ENCODE measurements at regions of chr10 and their contacts with region 1.

Region 1: GRCh38 chr10:48656241-48656913 is 28.3 kb upstream of the WDFY4 start:
- DNase-seq: peak; percentile 85
- H3K4me3 ChIP-seq: peak overlapping the region; percentile 30 to 70 (median 59)
- H3K27ac ChIP-seq: no peak overlapping the region
- H3K4me1 ChIP-seq: peaks cover 16% of the 10 kb centered on the region
- H3K27me3 ChIP-seq: no peaks in the 10 kb centered on the region
- CTCF ChIP-seq: peak; percentile 85

Region 2: DNA sequence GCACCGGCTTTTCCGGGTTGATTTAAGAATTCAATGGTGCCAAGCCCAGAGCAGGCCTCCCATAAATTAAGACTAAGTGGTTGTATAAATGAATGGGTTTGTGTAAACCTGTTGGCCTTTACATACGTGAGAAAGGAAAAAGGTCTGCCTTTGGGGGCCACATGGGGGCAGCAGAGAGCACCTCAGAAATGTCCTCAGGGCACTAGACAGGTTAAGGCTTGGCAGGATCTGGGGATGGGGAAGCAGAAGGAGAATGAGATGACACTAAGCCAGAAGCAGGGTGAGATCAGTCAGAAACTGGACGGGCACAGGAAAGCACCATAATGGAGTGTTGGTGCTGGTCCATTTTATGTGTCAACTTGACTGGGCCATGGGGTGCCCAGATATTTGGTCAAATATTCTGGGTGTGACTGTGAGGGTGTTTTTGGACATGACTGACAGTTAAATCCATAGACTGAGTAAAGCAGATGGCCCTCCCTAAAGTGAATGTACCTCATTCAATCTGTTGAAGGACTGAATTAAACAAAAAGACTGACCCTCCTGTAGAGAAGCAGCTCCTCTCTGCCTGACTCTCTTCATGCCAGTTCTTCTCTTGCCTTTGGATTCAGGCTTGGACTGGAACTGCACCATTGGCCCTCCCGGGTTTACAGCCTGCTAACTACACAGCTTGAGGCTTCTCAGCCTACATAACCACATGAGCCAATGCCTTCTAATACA is 440.7 kb before region 1 on chr10:
- CTCF ChIA-PET with region 1: no interaction called
- dilution Hi-C with region 1: no loop called
- in situ Hi-C with region 1: no loop called
- intact Hi-C with region 1: loop called (anchors 5 kb)
- DNase-seq: peak; percentile 69
- H3K4me3 ChIP-seq: no peak overlapping the region
- H3K27ac ChIP-seq: no peak overlapping the region
- H3K4me1 ChIP-seq: peaks cover 5% of the 10 kb centered on the region
- H3K27me3 ChIP-seq: no peaks in the 10 kb centered on the region
- CTCF ChIP-seq: peak; percentile 77 to 79

Region 3: DNA sequence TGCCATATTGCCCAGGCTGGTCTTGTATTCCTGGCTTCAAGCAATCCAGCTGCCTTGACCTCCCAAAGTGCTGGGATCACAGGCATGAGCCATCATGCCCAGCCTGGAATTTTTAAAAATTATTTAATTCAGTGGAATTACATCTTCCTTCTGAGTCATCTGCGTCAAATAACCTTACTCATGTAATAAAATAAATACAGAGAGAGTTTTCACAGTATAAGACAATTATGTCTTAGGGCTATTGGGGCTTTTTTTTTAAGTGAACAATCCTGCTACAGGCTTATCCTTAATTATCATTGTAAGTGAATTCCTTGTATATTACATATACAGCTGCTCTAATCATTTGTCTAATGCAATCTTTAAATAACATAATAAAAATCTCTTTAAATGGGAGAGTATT is 241.6 kb before region 1 on chr10:
- CTCF ChIA-PET with region 1: interaction called, 7 read pairs
- dilution Hi-C with region 1: no loop called
- in situ Hi-C with region 1: no loop called
- intact Hi-C with region 1: loop called (anchors 1 kb)
- DNase-seq: peak; percentile 77
- H3K4me3 ChIP-seq: no peak overlapping the region
- H3K27ac ChIP-seq: peak overlapping the region; percentile 6
- H3K4me1 ChIP-seq: peaks cover 40% of the 10 kb centered on the region
- H3K27me3 ChIP-seq: no peaks in the 10 kb centered on the region
- CTCF ChIP-seq: no peak

Region 4: DNA sequence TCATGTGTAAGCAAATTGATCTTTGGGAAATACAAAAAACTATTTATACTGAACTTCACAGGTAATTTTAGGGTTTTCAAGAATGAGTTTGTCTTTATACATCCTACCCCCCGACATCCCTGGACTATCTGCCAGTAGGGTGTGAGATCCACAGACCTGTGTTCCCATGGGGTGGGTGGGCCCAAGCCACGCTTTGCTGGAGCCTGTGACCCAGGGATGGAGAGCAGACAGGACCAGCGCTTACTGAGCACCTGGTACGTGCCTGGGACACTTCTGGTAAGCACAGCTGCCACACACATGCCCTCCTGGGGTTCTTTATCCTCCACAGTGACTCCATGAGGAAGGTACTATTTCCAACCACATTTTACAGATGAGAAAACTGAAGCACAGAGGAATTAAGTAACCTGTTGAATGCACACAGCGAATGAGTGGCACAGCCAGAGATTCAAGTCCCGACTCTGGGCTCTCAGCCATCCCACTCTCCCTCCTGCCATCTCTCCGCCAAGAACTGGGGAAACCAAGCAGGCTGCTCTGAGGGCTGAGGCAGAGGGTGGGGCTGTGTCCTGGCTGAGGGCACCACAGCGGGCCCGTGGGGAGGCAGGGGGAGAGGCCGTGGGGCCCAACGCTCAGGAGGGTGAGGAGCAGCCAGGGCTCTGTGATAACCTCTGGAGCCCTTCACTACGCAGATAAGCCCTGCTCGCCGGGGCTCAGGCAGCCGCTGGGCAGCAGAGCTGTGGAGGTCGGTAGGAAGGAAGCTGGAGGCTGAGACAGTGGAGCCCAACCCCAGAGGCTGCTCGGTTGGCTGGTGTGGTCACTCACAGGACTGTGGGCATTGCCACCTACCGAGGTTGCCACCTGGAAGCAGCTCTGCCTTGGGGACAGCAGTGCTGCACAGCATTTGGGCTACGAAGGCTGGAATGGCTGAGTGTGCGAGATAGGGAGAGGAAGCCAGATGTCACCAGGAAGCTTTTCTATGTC is 175.7 kb before region 1 on chr10:
- CTCF ChIA-PET with region 1: no interaction called
- dilution Hi-C with region 1: no loop called
- in situ Hi-C with region 1: no loop called
- intact Hi-C with region 1: no loop called
- DNase-seq: no peak
- H3K4me3 ChIP-seq: no peak overlapping the region
- H3K27ac ChIP-seq: no peak overlapping the region
- H3K4me1 ChIP-seq: peaks cover 17% of the 10 kb centered on the region
- H3K27me3 ChIP-seq: no peaks in the 10 kb centered on the region
- CTCF ChIP-seq: no peak

Region 5: DNA sequence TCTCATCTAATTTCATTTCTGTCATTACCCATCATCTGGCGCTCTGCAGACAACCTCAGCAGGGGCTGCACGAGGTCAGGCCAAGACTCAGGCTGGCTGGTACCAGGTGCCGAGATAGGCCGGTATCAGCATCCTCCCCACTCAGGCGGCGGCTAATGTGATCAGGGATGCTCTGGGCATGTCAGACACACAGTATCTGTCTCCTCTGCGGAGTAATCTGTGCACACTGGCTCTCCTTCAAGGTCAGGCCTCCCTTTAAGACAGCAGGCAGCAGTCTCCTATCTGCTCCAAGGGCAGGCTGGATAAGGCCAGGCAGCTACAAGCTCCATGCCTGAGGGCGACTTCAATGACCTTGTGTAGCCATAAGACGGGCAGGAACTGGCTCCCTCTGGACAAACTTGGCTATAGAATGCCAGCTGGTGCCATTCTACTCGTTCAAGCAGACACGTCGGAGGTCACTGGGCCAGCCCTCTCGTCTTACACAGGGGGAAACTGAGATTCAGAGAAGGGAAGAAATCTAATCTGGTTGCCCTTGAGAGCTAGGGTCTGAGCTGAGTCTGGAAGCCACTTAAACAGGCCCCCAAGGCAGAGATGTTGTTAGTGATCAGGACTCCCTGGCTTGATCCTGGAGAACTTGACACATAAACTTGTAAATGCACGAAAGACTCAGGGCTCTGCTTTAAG is 110.8 kb before region 1 on chr10:
- CTCF ChIA-PET with region 1: interaction called, 11 read pairs
- dilution Hi-C with region 1: no loop called
- in situ Hi-C with region 1: loop called (anchors 5 kb)
- intact Hi-C with region 1: no loop called
- DNase-seq: no peak
- H3K4me3 ChIP-seq: no peak overlapping the region
- H3K27ac ChIP-seq: no peak overlapping the region
- H3K4me1 ChIP-seq: no peaks in the 10 kb centered on the region
- H3K27me3 ChIP-seq: no peaks in the 10 kb centered on the region
- CTCF ChIP-seq: no peak

Region 6: GRCh38 chr10:48608279-48608681 is 48.1 kb before region 1 on chr10:
- CTCF ChIA-PET with region 1: interaction called, 29 read pairs
- dilution Hi-C with region 1: no loop called
- in situ Hi-C with region 1: no loop called
- intact Hi-C with region 1: loop called (anchors 1 kb)
- DNase-seq: peak; percentile 48
- H3K4me3 ChIP-seq: no peak overlapping the region
- H3K27ac ChIP-seq: no peak overlapping the region
- H3K4me1 ChIP-seq: peaks cover 59% of the 10 kb centered on the region
- H3K27me3 ChIP-seq: no peaks in the 10 kb centered on the region
- CTCF ChIP-seq: peak; percentile 90 to 94

Region 7: GRCh38 chr10:48885383-48885782 is 229.0 kb after region 1 on chr10:
- CTCF ChIA-PET with region 1: no interaction called
- dilution Hi-C with region 1: no loop called
- in situ Hi-C with region 1: no loop called
- intact Hi-C with region 1: loop called (anchors 10 kb)
- DNase-seq: no peak
- H3K4me3 ChIP-seq: no peak overlapping the region
- H3K27ac ChIP-seq: no peak overlapping the region
- H3K4me1 ChIP-seq: no peaks in the 10 kb centered on the region
- H3K27me3 ChIP-seq: no peaks in the 10 kb centered on the region
- CTCF ChIP-seq: peak; percentile 37 to 51

Region 8: DNA sequence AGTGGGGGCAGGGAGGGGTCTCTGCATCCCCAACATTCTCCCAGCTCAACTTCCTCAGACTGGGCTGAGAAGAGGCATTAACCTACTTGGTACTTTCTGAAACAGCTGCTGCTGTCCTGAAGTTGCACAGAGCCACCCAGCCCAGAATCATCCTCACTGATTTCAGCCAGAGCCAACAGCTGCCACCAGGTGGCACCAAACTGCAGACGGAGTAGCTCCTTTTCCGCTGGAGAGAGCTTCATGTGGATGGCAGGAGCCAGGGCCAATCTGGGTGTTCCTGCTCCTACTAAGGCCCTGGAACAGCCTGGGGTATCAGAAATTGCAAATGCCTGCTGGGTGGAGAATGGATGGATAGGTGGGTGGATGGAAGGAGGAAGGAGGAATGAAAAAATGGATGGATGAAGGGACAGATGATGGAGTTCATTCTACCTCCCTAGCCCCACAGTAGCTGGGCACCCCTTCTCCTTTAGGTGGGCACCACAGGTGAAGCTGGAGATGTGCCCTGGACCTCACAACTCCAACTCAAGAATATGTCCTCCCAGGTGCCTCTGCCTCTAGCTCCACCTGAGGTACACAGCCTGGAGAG is 751.3 kb after region 1 on chr10:
- CTCF ChIA-PET with region 1: no interaction called
- dilution Hi-C with region 1: no loop called
- in situ Hi-C with region 1: no loop called
- intact Hi-C with region 1: loop called (anchors 5 kb)
- DNase-seq: peak; percentile 60
- H3K4me3 ChIP-seq: no peak overlapping the region
- H3K27ac ChIP-seq: no peak overlapping the region
- H3K4me1 ChIP-seq: no peaks in the 10 kb centered on the region
- H3K27me3 ChIP-seq: no peaks in the 10 kb centered on the region
- CTCF ChIP-seq: peak; percentile 97

Measured in mammary epithelial cell (primary cell).